SK-N-SH (cell line): ENCODE measurements at regions of chrX and their contacts with region 1.

Region 1: DNA sequence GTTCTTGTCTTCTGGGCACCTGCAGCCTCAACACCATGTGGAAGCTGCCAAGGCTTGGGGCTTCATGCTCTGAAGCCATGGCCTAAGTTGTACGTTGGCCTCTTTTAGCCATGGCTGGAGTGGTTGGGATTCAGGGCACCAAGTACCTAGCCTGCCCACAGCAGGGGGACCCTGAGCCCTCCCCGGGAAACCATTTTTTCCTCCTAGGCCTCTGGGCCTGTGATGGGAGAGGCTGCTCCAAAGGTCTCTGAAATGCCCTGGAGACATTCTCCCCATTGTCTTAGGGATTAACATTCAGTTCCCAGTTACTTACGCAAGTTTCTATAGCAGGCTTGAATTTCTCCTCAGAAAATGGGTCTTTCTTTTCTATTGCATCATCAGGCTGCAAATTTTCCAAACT is 269.3 kb downstream of the NAP1L3 start:
- DNase-seq: no peak
- H3K4me3 ChIP-seq: no peak overlapping the region
- H3K27ac ChIP-seq: no peak overlapping the region
- H3K4me1 ChIP-seq: no peaks in the 10 kb centered on the region
- H3K27me3 ChIP-seq: no peaks in the 10 kb centered on the region
- CTCF ChIP-seq: no peak
- EP300 ChIP-seq: no peak
- RAD21 ChIP-seq: no peak

Region 2: DNA sequence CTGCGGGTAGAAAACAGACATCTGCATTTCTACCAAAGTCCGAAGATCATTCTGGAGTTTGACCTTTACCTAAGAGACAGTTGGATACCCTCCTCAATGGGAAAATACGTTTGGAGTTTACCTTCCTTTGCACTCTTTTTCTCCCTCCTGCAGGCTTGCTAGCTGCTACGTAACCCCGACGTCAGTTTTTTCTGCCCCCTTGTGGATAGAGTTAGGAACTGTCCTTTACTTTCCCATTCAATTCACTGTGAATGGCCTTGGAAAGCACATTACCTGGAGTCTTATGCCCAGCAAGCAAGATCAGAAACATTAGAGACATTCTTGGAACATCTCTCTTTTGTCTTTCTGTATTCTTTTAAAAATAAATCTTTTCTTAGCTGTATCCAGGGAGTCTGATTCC is 18.6 kb after region 1 on chrX:
- CTCF ChIA-PET with region 1: interaction called, 14 read pairs
- POLR2A ChIA-PET with region 1: no interaction called
- DNase-seq: peak; percentile 19
- H3K4me3 ChIP-seq: no peak overlapping the region
- H3K27ac ChIP-seq: no peak overlapping the region
- H3K4me1 ChIP-seq: no peaks in the 10 kb centered on the region
- H3K27me3 ChIP-seq: no peaks in the 10 kb centered on the region
- CTCF ChIP-seq: peak; percentile 74
- EP300 ChIP-seq: no peak
- RAD21 ChIP-seq: peak; percentile 43